B cell (primary cell): ENCODE measurements at regions of chr9 and their contacts with region 1.

Region 1: DNA sequence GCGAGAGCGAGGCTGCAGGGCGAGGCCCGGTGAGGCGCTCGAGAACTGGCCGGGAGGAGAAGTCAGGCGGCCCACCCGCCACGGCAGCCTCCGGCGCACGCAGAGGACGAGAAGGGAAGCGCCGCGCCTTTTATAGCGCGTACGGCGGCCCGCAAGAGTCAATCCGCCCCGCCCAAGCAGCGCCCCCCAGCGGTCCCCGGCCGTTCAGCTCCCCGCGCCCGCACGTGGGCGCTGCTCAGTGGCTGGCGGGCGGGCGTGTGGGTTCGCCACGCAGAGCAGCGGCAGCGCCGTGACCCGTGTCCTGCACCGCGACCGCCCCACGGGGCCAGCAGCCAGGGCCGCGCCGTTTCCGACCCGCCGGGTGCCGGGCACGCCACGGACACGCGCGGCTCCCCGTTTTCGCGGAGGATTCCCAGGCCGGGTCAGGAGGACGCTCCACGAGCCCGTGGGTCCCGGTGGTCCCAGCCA is 14.6 kb downstream of the LCN10 start:
- DNase-seq: peak; percentile 96
- ATAC-seq: peak; percentile 79
- H3K4me3 ChIP-seq: peak overlapping the region in 4 of 5 experiments; percentile 90 to 99 (median 98)
- H3K4me3 Mint-ChIP-seq: peak overlapping the region; percentile 96
- H3K27ac ChIP-seq: peak overlapping the region; percentile 34 to 79
- H3K27ac Mint-ChIP-seq: peak overlapping the region; percentile 87
- H3K4me1 ChIP-seq: peaks cover 22 to 35% of the 10 kb centered on the region in 2 donors
- H3K4me1 Mint-ChIP-seq: peaks cover 49% of the 10 kb centered on the region
- H3K27me3 ChIP-seq: no peaks in the 10 kb centered on the region
- H3K27me3 Mint-ChIP-seq: no peaks in the 10 kb centered on the region
- CTCF ChIP-seq: peak; percentile 84

Region 2: GRCh38 chr9:136578915-136579649 is 149.0 kb before region 1 on chr9:
- CTCF ChIA-PET with region 1: no interaction called
- POLR2A ChIA-PET with region 1: no interaction called
- intact Hi-C with region 1: no loop called
- DNase-seq: peak; percentile 42
- ATAC-seq: peak; percentile 33
- H3K4me3 ChIP-seq: no peak overlapping the region
- H3K4me3 Mint-ChIP-seq: no peak overlapping the region
- H3K27ac ChIP-seq: no peak overlapping the region
- H3K27ac Mint-ChIP-seq: no peak overlapping the region
- H3K4me1 ChIP-seq: peaks cover 0 to 14% of the 10 kb centered on the region in 2 donors
- H3K4me1 Mint-ChIP-seq: peaks cover 7% of the 10 kb centered on the region
- H3K27me3 ChIP-seq: peaks cover 0 to 8% (median 2%) of the 10 kb centered on the region in 4 experiments
- H3K27me3 Mint-ChIP-seq: peaks cover 8% of the 10 kb centered on the region
- CTCF ChIP-seq: no peak

Region 3: GRCh38 chr9:136686794-136687711 is 41.1 kb before region 1 on chr9 and contains the start of gene AGPAT2:
- CTCF ChIA-PET with region 1: interaction called, 6 read pairs
- POLR2A ChIA-PET with region 1: interaction called, 4 read pairs
- intact Hi-C with region 1: loop called (anchors 1 kb)
- DNase-seq: peak; percentile 83
- ATAC-seq: peak; percentile 96
- H3K4me3 ChIP-seq: peak within 1 kb of the TSS; percentile 23 to 76 (median 72)
- H3K4me3 Mint-ChIP-seq: peak within 1 kb of the TSS; percentile 83
- H3K27ac ChIP-seq: peak within 1 kb of the TSS in 1 of 2 donors; percentile 64
- H3K27ac Mint-ChIP-seq: peak within 1 kb of the TSS; percentile 75
- H3K4me1 ChIP-seq: peaks cover 14 to 22% of the 10 kb centered on the region in 2 donors
- H3K4me1 Mint-ChIP-seq: peaks cover 14% of the 10 kb centered on the region
- H3K27me3 ChIP-seq: no peaks in the 10 kb centered on the region
- H3K27me3 Mint-ChIP-seq: no peaks in the 10 kb centered on the region
- CTCF ChIP-seq: no peak
- total RNA-seq, gene AGPAT2: 25.1 and 32.7 TPM in 2 replicates

Region 4: GRCh38 chr9:136711751-136712689 is 16.1 kb before region 1 on chr9 and contains the start of gene DIPK1B:
- CTCF ChIA-PET with region 1: interaction called, 23 read pairs
- POLR2A ChIA-PET with region 1: interaction called, 8 read pairs
- intact Hi-C with region 1: no loop called
- DNase-seq: peak; percentile 67
- ATAC-seq: peak; percentile 55
- H3K4me3 ChIP-seq: peak within 1 kb of the TSS in 4 of 5 experiments; percentile 33 to 48 (median 42)
- H3K4me3 Mint-ChIP-seq: peak within 1 kb of the TSS; percentile 80
- H3K27ac ChIP-seq: no peak within 1 kb of the TSS
- H3K27ac Mint-ChIP-seq: peak within 1 kb of the TSS; percentile 70
- H3K4me1 ChIP-seq: peaks cover 31 to 33% of the 10 kb centered on the region in 2 donors
- H3K4me1 Mint-ChIP-seq: peaks cover 21% of the 10 kb centered on the region
- H3K27me3 ChIP-seq: peaks cover 0 to 39% (median 6%) of the 10 kb centered on the region in 4 experiments
- H3K27me3 Mint-ChIP-seq: peaks cover 23% of the 10 kb centered on the region
- CTCF ChIP-seq: no peak
- total RNA-seq, gene DIPK1B: 9.2 and 9.6 TPM in 2 replicates

Region 5: DNA sequence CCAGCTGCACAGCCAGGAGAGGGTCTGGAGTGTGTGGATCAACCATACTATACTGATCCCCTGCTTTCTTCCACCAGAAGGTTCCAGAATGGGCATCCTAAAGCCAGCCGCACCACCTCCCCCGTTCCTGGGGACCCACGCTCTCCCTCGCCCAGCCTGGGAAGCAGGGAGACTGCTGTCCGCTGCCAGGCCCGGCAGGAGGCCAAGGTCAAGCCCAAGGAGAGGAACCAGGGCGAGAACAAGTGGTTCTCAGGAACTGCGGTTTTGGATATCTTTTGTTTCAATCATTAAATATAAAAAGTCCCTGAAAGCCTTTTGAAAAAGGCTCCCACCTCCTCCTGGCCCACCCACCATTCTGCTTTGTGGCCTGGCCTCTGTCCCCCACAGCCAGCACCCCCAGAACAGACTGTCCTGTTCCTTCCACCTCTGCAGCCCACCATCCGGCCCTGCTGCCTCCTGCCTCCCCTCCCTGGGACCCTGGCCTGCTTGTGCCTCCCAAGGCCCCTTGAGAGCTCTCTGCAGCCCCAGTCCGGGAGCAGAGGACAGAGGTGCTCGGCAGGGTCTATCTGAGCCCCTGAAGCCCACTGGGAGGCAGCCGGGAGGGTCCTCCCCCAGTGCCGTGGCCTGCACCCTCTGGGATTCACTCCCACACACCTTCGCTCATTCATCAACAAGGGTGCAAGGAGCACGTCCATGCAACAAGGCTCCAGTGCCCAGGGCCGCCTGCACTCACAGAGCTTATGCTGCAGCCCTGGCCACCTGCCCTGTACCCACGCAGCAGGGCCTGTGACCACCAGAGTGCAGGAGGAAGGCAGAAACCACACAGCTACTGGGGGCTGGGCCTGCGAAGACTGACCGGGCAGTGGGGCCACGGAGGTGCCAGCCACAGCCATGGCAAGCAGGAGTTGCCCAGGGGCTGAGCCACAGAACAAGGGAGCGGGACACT is 20.8 kb after region 1 on chr9:
- CTCF ChIA-PET with region 1: interaction called, 47 read pairs
- POLR2A ChIA-PET with region 1: interaction called, 60 read pairs
- intact Hi-C with region 1: loop called (anchors 1 kb)
- DNase-seq: peak; percentile 53
- ATAC-seq: peak; percentile 25
- H3K4me3 ChIP-seq: peak overlapping the region in 1 of 5 experiments; percentile 4
- H3K4me3 Mint-ChIP-seq: peak overlapping the region; percentile 75
- H3K27ac ChIP-seq: peak overlapping the region; percentile 71 to 83
- H3K27ac Mint-ChIP-seq: peak overlapping the region; percentile 96
- H3K4me1 ChIP-seq: peaks cover 33 to 56% of the 10 kb centered on the region in 2 donors
- H3K4me1 Mint-ChIP-seq: peaks cover 58% of the 10 kb centered on the region
- H3K27me3 ChIP-seq: no peaks in the 10 kb centered on the region
- H3K27me3 Mint-ChIP-seq: no peaks in the 10 kb centered on the region
- CTCF ChIP-seq: no peak

Region 6: DNA sequence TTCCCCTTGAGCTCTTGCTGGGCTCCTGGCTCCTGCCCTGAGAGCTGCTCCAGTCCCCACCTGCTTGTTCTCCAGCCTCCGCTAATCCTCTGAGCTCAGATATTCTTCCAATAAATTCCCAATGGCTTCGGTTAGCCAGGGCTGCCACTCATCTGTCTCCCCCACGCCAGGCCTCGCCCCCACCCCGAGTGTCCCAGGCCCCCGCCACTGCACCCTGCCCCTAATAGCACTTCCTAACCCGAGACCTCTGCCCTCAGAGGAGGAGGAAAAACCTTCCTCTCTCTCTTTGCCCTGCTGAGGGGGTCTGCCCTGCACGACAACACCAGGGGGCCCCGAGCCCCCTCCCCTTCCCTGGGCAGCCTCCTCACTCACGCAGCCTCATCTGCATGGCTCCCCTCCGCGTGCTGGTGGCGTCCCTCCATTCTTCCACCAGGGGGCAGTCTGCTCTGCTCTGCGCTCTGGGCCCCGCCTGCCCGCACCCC is 41.6 kb after region 1 on chr9:
- CTCF ChIA-PET with region 1: interaction called, 13 read pairs
- POLR2A ChIA-PET with region 1: no interaction called
- intact Hi-C with region 1: no loop called
- DNase-seq: peak; percentile 67
- ATAC-seq: no peak
- H3K4me3 ChIP-seq: no peak overlapping the region
- H3K4me3 Mint-ChIP-seq: peak overlapping the region; percentile 37
- H3K27ac ChIP-seq: no peak overlapping the region
- H3K27ac Mint-ChIP-seq: peak overlapping the region; percentile 46
- H3K4me1 ChIP-seq: peaks cover 23 to 45% of the 10 kb centered on the region in 2 donors
- H3K4me1 Mint-ChIP-seq: peaks cover 37% of the 10 kb centered on the region
- H3K27me3 ChIP-seq: peaks cover 0 to 8% (median 0%) of the 10 kb centered on the region in 4 experiments
- H3K27me3 Mint-ChIP-seq: peaks cover 6% of the 10 kb centered on the region
- CTCF ChIP-seq: peak; percentile 33